Left lung (tissue), 14 donors: ENCODE measurements at regions of chr11 and their contacts with region 1.

Region 1: GRCh38 chr11:114262681-114263512 is 33.3 kb upstream of the NNMT start:
- DNase-seq: peak in 1 of 4 donors; percentile 71
- ATAC-seq: peak; percentile 76
- H3K4me3 ChIP-seq: no peak overlapping the region
- H3K27ac ChIP-seq: no peak overlapping the region
- H3K4me1 ChIP-seq: peaks cover 0 to 33% of the 10 kb centered on the region in 2 donors
- H3K27me3 ChIP-seq: no peaks in the 10 kb centered on the region
- CTCF ChIP-seq: peak; percentile 33 to 46

Region 2: GRCh38 chr11:113896156-113896879 is 366.6 kb before region 1 on chr11:
- intact Hi-C with region 1: loop called in 1 of 2 experiments (anchors 10 kb)
- DNase-seq: peak in 2 of 4 donors; percentile 34 to 58
- ATAC-seq: peak; percentile 89
- H3K4me3 ChIP-seq: no peak overlapping the region
- H3K27ac ChIP-seq: no peak overlapping the region
- H3K4me1 ChIP-seq: no peaks in the 10 kb centered on the region
- H3K27me3 ChIP-seq: no peaks in the 10 kb centered on the region
- CTCF ChIP-seq: peak; percentile 64 to 86

Region 3: GRCh38 chr11:113997473-113997872 is 265.4 kb before region 1 on chr11:
- intact Hi-C with region 1: loop called in 1 of 2 experiments (anchors 5 kb)
- DNase-seq: no peak
- ATAC-seq: no peak
- H3K4me3 ChIP-seq: no peak overlapping the region
- H3K27ac ChIP-seq: no peak overlapping the region
- H3K4me1 ChIP-seq: no peaks in the 10 kb centered on the region
- H3K27me3 ChIP-seq: peaks cover 0 to 12% of the 10 kb centered on the region in 2 donors
- CTCF ChIP-seq: no peak

Region 4: DNA sequence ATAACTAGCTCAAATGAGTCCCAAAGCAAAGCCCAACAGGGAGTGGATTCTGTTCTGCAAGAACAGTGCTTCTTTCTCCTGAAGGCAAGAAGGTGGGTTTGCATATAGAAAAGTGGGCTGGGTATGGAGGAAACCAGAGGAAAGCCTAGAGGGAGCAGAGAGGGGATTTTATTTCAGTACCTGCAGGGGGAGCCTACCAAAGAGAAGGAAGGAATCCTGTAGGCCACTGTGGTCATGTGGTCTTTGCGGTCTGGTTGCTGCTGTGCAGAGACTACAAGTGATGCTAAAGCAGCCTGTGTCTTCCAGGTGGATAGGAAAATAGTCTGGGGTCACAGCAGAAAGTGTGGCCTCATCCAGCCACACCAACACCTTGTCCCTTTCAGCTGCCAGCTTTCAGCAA is 236.5 kb before region 1 on chr11:
- intact Hi-C with region 1: loop called in 1 of 2 experiments (anchors 5 kb)
- DNase-seq: no peak
- ATAC-seq: no peak
- H3K4me3 ChIP-seq: no peak overlapping the region
- H3K27ac ChIP-seq: no peak overlapping the region
- H3K4me1 ChIP-seq: no peaks in the 10 kb centered on the region
- H3K27me3 ChIP-seq: peaks cover 0 to 5% of the 10 kb centered on the region in 2 donors
- CTCF ChIP-seq: no peak